Activated CD8-positive, alpha-beta T cell treated with anti-CD3 and anti-CD28 coated beads for 36 hours (primary cell): ENCODE measurements at regions of chr1 and their contacts with region 1.

Region 1: DNA sequence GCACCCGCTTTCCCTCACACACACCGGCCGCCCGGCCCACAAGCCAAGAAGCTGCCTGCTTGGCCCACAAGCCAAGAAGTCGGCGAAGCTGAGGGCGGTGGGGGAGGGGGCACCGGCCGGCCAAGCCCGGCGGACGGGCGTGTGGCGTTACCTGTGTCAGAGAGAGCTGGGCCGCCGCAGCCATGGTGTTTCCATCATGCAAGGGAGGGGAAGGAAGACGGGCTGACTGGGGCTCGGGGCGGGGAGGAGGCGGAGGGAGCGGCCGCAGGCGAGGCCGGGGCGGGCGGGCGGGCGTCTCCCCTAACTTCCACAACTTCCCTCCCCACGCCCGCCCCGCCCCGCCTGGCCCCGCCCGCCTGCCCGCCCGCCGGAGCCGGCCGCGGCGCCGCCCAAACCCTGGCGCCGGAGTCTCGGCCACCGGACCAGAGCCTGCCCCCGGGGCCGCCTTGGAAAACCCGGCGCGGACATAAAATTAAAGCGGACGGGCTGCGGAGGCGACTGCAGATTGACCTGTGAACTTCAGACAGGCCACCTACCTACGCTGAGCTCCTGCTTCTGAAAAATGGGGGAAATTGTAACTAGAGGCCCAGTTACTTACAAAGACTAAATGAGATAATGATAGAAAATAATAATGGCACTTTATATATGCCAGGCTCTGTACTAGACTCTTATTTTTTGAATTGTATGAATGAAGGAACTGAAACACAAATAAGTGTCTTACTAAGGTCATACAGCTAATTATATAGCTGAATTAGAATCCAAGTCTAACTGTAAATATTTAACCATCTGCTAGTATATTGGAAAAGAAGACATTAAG is at the start of gene EPS15:
- DNase-seq: peak; percentile 88
- ATAC-seq: peak; percentile 85
- H3K4me3 Mint-ChIP-seq: peak within 1 kb of the TSS; percentile 89
- H3K27ac Mint-ChIP-seq: peak within 1 kb of the TSS; percentile 89
- H3K4me1 Mint-ChIP-seq: peaks cover 47% of the 10 kb centered on the region
- H3K27me3 Mint-ChIP-seq: no peaks in the 10 kb centered on the region
- CTCF ChIP-seq: no peak
- total RNA-seq, gene EPS15: 56.6 to 63.6 TPM

Region 2: GRCh38 chr1:51506537-51506936 is 12.7 kb before region 1 on chr1:
- CTCF ChIA-PET with region 1: interaction called, 5 read pairs
- POLR2A ChIA-PET with region 1: interaction called, 28 read pairs
- intact Hi-C with region 1: no loop called
- DNase-seq: peak; percentile 46
- ATAC-seq: peak; percentile 63
- H3K4me3 Mint-ChIP-seq: peak overlapping the region; percentile 1
- H3K27ac Mint-ChIP-seq: peak overlapping the region; percentile 67
- H3K4me1 Mint-ChIP-seq: peaks cover 53% of the 10 kb centered on the region
- H3K27me3 Mint-ChIP-seq: no peaks in the 10 kb centered on the region
- CTCF ChIP-seq: no peak